GM12878 (cell line): ENCODE measurements at regions of chr11 and their contacts with region 1.

Region 1: GRCh38 chr11:60193687-60194433 is 11.0 kb upstream of the MS4A6A start:
- DNase-seq: peak; percentile 80
- ATAC-seq: peak; percentile 99
- H3K4me3 ChIP-seq: 0 out of 2 replicates have a peak overlapping the region, but pooled peaks have one; percentile 28
- H3K27ac ChIP-seq: peak overlapping the region; percentile 70
- H3K4me1 ChIP-seq: peaks cover 24% of the 10 kb centered on the region
- H3K27me3 ChIP-seq: no peaks in the 10 kb centered on the region
- CTCF ChIP-seq: peak; percentile 82 to 96 (median 94)
- EP300 ChIP-seq: peak; percentile 40 to 47; a peak in 2 of 4 replicates
- POLR2A ChIP-seq: no peak
- RAD21 ChIP-seq: peak; percentile 76

Region 2: DNA sequence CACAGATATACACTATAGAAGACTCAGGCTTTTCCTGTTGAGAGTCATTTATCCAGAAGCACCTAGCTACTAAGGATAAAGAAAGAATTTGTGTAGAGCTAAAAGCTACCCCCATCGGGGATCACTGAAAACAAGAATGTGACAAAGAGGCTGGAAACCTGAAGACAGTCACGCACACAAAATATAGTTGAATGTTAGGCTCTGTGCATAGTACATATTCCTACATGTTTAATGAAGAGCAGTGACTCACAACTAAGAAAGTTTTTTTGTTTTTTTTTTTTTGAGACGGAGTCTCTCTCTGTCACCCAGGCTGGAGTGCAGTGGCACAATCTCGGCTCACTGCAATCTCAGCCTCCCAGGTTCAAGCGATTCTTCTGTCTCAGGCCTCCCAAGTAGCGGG is 488.6 kb before region 1 on chr11:
- CTCF ChIA-PET with region 1: no interaction called
- POLR2A ChIA-PET with region 1: no interaction called
- RAD21 ChIA-PET with region 1: no interaction called
- SMC1A ChIA-PET with region 1: no interaction called
- in situ Hi-C with region 1: no loop called
- intact Hi-C with region 1: no loop called
- DNase-seq: no peak
- ATAC-seq: no peak
- H3K4me3 ChIP-seq: no peak overlapping the region
- H3K27ac ChIP-seq: no peak overlapping the region
- H3K4me1 ChIP-seq: no peaks in the 10 kb centered on the region
- H3K27me3 ChIP-seq: no peaks in the 10 kb centered on the region
- CTCF ChIP-seq: no peak
- EP300 ChIP-seq: no peak
- POLR2A ChIP-seq: no peak
- RAD21 ChIP-seq: no peak

Region 3: DNA sequence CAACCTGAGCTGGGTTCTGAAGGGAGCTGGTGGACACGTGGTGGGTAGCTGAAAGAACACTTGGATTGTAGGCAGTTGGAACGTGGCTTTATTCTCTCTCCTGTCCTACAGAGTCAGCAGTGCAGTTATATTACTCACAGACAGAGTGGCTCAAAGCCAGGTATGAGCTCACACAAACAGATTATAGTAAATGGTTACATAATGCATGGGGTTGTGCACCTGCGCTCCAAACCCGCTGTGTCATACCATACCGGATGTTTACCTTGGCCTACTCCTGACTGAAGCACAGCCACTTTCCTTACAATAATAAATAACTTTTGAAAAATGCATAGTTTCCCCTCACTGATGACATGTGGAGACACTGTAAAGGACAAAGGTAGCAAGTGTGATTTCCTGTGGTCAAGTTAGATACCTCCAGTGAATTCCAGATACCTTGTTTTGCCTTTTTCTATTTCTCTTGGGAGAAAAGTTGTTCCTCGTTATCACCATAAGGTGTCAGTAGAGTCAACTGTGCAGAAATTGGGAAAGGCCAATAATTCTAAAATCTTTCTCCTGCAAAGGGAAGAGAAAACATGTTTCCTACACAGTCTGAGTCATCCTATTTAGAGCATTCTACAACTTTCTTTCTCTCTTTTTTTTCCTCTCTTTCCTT is 24.5 kb before region 1 on chr11:
- CTCF ChIA-PET with region 1: interaction called, 5 read pairs
- POLR2A ChIA-PET with region 1: no interaction called
- RAD21 ChIA-PET with region 1: no interaction called
- SMC1A ChIA-PET with region 1: interaction called, 10 read pairs
- in situ Hi-C with region 1: no loop called
- intact Hi-C with region 1: no loop called
- DNase-seq: no peak
- ATAC-seq: peak; percentile 51
- H3K4me3 ChIP-seq: no peak overlapping the region
- H3K27ac ChIP-seq: no peak overlapping the region
- H3K4me1 ChIP-seq: no peaks in the 10 kb centered on the region
- H3K27me3 ChIP-seq: no peaks in the 10 kb centered on the region
- CTCF ChIP-seq: peak; percentile 4 to 32 (median 8); a peak in 1 of 6 replicates
- EP300 ChIP-seq: no peak
- POLR2A ChIP-seq: no peak
- RAD21 ChIP-seq: peak; percentile 47

Region 4: GRCh38 chr11:60175860-60176275 is 18.0 kb before region 1 on chr11:
- CTCF ChIA-PET with region 1: interaction called, 28 read pairs
- POLR2A ChIA-PET with region 1: interaction called, 8 read pairs
- RAD21 ChIA-PET with region 1: interaction called, 6 read pairs
- SMC1A ChIA-PET with region 1: interaction called, 85 read pairs
- in situ Hi-C with region 1: no loop called
- intact Hi-C with region 1: no loop called
- DNase-seq: peak; percentile 80
- ATAC-seq: peak; percentile 96
- H3K4me3 ChIP-seq: no peak overlapping the region
- H3K27ac ChIP-seq: no peak overlapping the region
- H3K4me1 ChIP-seq: peaks cover 9% of the 10 kb centered on the region
- H3K27me3 ChIP-seq: no peaks in the 10 kb centered on the region
- CTCF ChIP-seq: no peak
- EP300 ChIP-seq: no peak
- POLR2A ChIP-seq: no peak
- RAD21 ChIP-seq: no peak